CD8-positive, alpha-beta T cell (primary cell): ENCODE measurements at regions of chr15 and their contacts with region 1.

Region 1: DNA sequence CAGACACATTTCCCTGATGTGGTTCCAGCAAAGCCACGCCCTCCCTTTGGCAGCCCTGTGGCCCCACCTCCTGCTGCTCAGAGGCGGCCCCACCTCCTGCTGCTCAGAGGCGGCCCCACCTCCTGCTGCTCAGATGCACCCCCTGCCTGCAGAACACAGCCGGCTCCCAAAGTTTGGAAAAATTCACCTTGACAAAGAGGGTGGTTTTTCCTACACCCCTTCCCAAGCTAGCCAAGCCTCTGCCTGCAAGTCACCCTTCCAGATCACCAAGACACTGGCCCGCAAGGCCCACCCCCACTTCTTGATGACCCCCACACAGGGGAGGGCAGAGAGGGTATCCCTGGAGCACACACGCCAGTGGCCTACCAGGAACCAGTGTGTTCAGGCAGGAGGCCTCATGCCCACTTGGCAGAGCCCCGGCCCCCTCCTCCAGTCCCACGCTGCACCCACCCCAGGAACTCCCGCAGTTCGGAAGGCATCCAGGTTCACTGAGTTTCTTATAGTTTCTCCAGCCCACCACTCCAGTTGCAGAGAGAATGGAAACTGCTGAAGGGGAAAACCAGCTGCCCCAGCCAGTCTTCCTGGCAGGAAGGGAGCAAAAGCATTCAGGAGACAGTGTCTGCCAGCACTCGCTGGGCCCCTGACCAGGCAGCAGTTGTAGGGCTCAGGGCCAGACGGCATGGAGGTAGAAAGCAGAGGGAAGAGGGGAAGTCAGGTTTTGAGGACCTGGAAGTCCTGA is 2.3 kb upstream of the HAPLN3 start:
- DNase-seq: peak; percentile 61 to 89 (median 81)
- ATAC-seq: peak; percentile 85
- H3K4me3 ChIP-seq: peak overlapping the region in 1 of 2 experiments; percentile 20
- H3K4me3 Mint-ChIP-seq: peak overlapping the region; percentile 63
- H3K27ac ChIP-seq: no peak overlapping the region
- H3K27ac Mint-ChIP-seq: no peak overlapping the region
- H3K4me1 ChIP-seq: peaks cover 38% of the 10 kb centered on the region
- H3K4me1 Mint-ChIP-seq: peaks cover 37% of the 10 kb centered on the region
- H3K27me3 ChIP-seq: peaks cover 0 to 5% of the 10 kb centered on the region in 2 experiments
- H3K27me3 Mint-ChIP-seq: no peaks in the 10 kb centered on the region
- CTCF ChIP-seq: peak; percentile 38

Region 2: GRCh38 chr15:88467073-88467934 is 430.3 kb before region 1 on chr15 and contains the starts of genes MRPL46 and MRPS11:
- CTCF ChIA-PET with region 1: interaction called, 3 read pairs
- POLR2A ChIA-PET with region 1: no interaction called
- intact Hi-C with region 1: loop called in 1 of 2 experiments (anchors 5 kb)
- DNase-seq: peak; percentile 81 to 94 (median 89)
- ATAC-seq: peak; percentile 91
- H3K4me3 ChIP-seq: peak within 1 kb of the TSS; percentile 57 to 92
- H3K4me3 Mint-ChIP-seq: peak within 1 kb of the TSS; percentile 98
- H3K27ac ChIP-seq: peak within 1 kb of the TSS; percentile 90 to 98
- H3K27ac Mint-ChIP-seq: peak within 1 kb of the TSS; percentile 99
- H3K4me1 ChIP-seq: peaks cover 17% of the 10 kb centered on the region
- H3K4me1 Mint-ChIP-seq: peaks cover 27% of the 10 kb centered on the region
- H3K27me3 ChIP-seq: no peaks in the 10 kb centered on the region
- H3K27me3 Mint-ChIP-seq: no peaks in the 10 kb centered on the region
- CTCF ChIP-seq: no peak
- total RNA-seq, gene MRPL46: 11.8 to 12.6 TPM
- total RNA-seq, gene MRPS11: 7.4 to 9.6 TPM

Region 3: GRCh38 chr15:88878720-88879184 is 18.9 kb before region 1 on chr15:
- CTCF ChIA-PET with region 1: interaction called, 11 read pairs
- POLR2A ChIA-PET with region 1: no interaction called
- intact Hi-C with region 1: no loop called
- DNase-seq: peak in 6 of 9 experiments; percentile 6 to 52 (median 32)
- ATAC-seq: peak; percentile 61
- H3K4me3 ChIP-seq: no peak overlapping the region
- H3K4me3 Mint-ChIP-seq: no peak overlapping the region
- H3K27ac ChIP-seq: no peak overlapping the region
- H3K27ac Mint-ChIP-seq: no peak overlapping the region
- H3K4me1 ChIP-seq: no peaks in the 10 kb centered on the region
- H3K4me1 Mint-ChIP-seq: peaks cover 3% of the 10 kb centered on the region
- H3K27me3 ChIP-seq: no peaks in the 10 kb centered on the region
- H3K27me3 Mint-ChIP-seq: no peaks in the 10 kb centered on the region
- CTCF ChIP-seq: peak; percentile 35

Region 4: GRCh38 chr15:89017370-89018066 is 119.9 kb after region 1 on chr15:
- CTCF ChIA-PET with region 1: interaction called, 64 read pairs
- POLR2A ChIA-PET with region 1: interaction called, 3 read pairs
- intact Hi-C with region 1: loop called (anchors 1 kb)
- DNase-seq: peak; percentile 71 to 92 (median 86)
- ATAC-seq: peak; percentile 96
- H3K4me3 ChIP-seq: peak overlapping the region; percentile 19 to 22
- H3K4me3 Mint-ChIP-seq: peak overlapping the region; percentile 68
- H3K27ac ChIP-seq: no peak overlapping the region
- H3K27ac Mint-ChIP-seq: peak overlapping the region; percentile 18
- H3K4me1 ChIP-seq: peaks cover 9% of the 10 kb centered on the region
- H3K4me1 Mint-ChIP-seq: peaks cover 12% of the 10 kb centered on the region
- H3K27me3 ChIP-seq: no peaks in the 10 kb centered on the region
- H3K27me3 Mint-ChIP-seq: peaks cover 5% of the 10 kb centered on the region
- CTCF ChIP-seq: peak; percentile 58

Region 5: GRCh38 chr15:89087830-89088604 is 190.4 kb after region 1 on chr15 and contains the start of gene ABHD2:
- CTCF ChIA-PET with region 1: no interaction called
- POLR2A ChIA-PET with region 1: no interaction called
- intact Hi-C with region 1: loop called in 1 of 2 experiments (anchors 1 kb)
- DNase-seq: peak; percentile 94 to 99 (median 98)
- ATAC-seq: peak; percentile 94
- H3K4me3 ChIP-seq: peak within 1 kb of the TSS; percentile 65 to 87
- H3K4me3 Mint-ChIP-seq: no peak within 1 kb of the TSS
- H3K27ac ChIP-seq: peak within 1 kb of the TSS; percentile 50 to 69
- H3K27ac Mint-ChIP-seq: peak within 1 kb of the TSS; percentile 70
- H3K4me1 ChIP-seq: peaks cover 43% of the 10 kb centered on the region
- H3K4me1 Mint-ChIP-seq: peaks cover 35% of the 10 kb centered on the region
- H3K27me3 ChIP-seq: no peaks in the 10 kb centered on the region
- H3K27me3 Mint-ChIP-seq: no peaks in the 10 kb centered on the region
- CTCF ChIP-seq: no peak
- total RNA-seq, gene ABHD2: 22.2 to 25.7 TPM

Region 6: DNA sequence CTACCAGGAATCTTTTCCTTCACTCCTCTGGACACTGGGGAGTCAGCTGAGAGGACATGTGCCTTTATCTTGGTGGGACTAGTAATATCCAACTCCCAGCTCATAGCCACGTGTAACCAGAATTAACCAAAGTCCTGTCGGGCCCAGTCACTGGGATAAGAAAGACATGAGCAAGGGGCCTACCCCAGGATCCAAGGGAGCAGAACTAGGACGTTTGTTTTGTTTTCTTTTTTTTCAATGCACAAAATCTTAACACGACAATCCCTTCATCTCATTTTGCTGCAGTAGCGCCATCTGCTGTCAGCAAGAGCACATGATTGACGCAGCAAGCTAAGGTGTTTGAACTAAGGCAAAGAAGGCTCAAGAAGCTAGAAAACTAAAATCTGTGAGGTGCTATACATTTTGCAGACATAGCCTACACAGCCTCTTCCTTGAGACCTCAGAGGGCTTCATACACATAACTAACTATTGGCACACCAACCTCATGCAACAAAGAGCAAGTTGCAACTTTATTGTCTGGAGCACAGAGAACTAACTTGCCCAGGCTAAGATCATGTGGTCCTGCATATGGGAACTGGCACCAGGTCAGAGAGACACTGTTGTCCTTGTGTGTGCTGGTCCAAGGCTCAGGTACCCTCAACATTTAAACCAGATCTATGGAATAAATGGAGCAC is 280.1 kb after region 1 on chr15:
- CTCF ChIA-PET with region 1: interaction called, 13 read pairs
- POLR2A ChIA-PET with region 1: interaction called, 6 read pairs
- intact Hi-C with region 1: loop called (anchors 1 kb)
- DNase-seq: peak; percentile 17 to 81 (median 58)
- ATAC-seq: peak; percentile 40
- H3K4me3 ChIP-seq: no peak overlapping the region
- H3K4me3 Mint-ChIP-seq: no peak overlapping the region
- H3K27ac ChIP-seq: no peak overlapping the region
- H3K27ac Mint-ChIP-seq: no peak overlapping the region
- H3K4me1 ChIP-seq: no peaks in the 10 kb centered on the region
- H3K4me1 Mint-ChIP-seq: peaks cover 5% of the 10 kb centered on the region
- H3K27me3 ChIP-seq: no peaks in the 10 kb centered on the region
- H3K27me3 Mint-ChIP-seq: no peaks in the 10 kb centered on the region
- CTCF ChIP-seq: peak; percentile 85

Region 7: GRCh38 chr15:89334510-89335288 is 437.1 kb after region 1 on chr15 and contains the start of gene POLG:
- CTCF ChIA-PET with region 1: no interaction called
- POLR2A ChIA-PET with region 1: no interaction called
- intact Hi-C with region 1: loop called in 1 of 2 experiments (anchors 5 kb)
- DNase-seq: peak; percentile 98 to 99 (median 99)
- ATAC-seq: peak; percentile 89
- H3K4me3 ChIP-seq: peak within 1 kb of the TSS; percentile 57 to 72
- H3K4me3 Mint-ChIP-seq: peak within 1 kb of the TSS; percentile 89
- H3K27ac ChIP-seq: peak within 1 kb of the TSS; percentile 68 to 76
- H3K27ac Mint-ChIP-seq: peak within 1 kb of the TSS; percentile 99
- H3K4me1 ChIP-seq: peaks cover 56% of the 10 kb centered on the region
- H3K4me1 Mint-ChIP-seq: peaks cover 46% of the 10 kb centered on the region
- H3K27me3 ChIP-seq: no peaks in the 10 kb centered on the region
- H3K27me3 Mint-ChIP-seq: no peaks in the 10 kb centered on the region
- CTCF ChIP-seq: no peak
- total RNA-seq, gene POLG: 147 to 158 TPM